ENCODE measurements at regions of chr1 and their contacts with region 1.

Region 1: DNA sequence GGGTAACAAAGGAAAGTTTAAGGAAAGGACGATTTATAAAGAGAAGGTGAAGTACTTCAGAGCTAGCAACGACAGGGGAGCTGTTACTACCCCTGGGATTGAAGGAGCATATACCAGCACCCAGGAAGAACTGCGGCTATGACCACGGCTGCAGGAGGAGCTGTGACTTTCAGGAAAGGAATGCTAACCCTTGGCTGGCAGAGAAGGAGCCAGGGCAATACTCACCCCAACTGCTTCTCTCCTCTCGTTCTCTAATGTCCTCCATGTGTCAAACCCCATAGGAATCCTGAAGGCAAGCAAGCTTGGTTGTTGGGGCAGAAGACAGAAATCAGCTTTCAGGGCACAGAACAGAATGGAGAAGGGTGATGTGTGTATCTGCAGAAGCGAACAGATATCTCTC is 120.5 kb downstream of the TMEM53 start:
- DNase-seq: peak; percentile 79
- H3K4me3 Mint-ChIP-seq: peak overlapping the region; percentile 15
- H3K27ac Mint-ChIP-seq: peak overlapping the region; percentile 93
- H3K4me1 Mint-ChIP-seq: peaks cover 67% of the 10 kb centered on the region
- H3K27me3 Mint-ChIP-seq: no peaks in the 10 kb centered on the region
- CTCF ChIP-seq: no peak

Region 2: DNA sequence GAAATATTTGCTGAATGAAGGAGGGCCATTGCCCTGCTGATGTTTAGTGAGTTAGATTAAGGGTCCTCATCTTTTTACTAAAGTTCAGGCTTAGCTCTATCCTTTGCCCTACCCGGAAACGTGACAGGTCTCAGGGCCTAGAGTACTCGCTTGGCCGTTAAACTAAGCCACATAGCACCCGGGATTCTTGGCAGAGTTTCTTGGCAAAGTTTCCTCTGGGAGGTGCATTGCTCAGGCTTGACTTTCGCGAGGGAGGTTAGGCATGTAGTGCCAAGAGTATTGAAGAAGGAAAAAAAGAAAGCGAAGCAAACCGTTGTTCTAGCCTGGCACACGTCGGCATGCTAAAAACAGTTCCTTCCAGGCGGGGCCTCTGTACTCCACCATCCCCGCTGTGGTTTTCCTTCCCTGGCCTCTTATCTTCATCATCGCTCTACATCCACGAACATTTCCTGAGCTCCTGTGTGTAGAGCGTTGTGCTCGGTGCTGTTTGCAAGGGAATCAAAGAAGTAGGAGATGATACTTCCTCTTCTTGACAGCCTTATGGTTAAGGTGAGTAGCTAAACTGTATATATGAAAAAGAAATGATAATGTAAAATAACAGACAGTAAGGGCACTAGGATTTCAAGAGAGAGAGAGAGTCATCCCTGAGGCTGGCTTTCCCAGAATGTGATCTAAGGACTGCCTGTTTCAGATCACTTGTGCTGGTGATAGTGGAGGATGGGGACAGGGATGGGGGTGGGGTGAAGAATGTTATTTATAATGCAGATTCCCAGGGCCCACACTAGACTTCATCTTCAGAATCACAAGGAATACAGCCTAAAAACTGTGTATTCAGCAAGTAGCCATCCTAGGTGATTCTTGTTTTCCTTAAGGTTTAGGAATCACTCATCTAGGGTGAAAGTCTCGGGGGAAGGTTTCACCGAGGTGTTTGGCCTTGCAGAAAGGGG is 129.9 kb before region 1 on chr1:
- CTCF ChIA-PET with region 1: interaction called, 3 read pairs
- POLR2A ChIA-PET with region 1: interaction called, 25 read pairs
- intact Hi-C with region 1: no loop called
- DNase-seq: peak; percentile 98
- H3K4me3 Mint-ChIP-seq: peak overlapping the region; percentile 73
- H3K27ac Mint-ChIP-seq: peak overlapping the region; percentile 89
- H3K4me1 Mint-ChIP-seq: peaks cover 36% of the 10 kb centered on the region
- H3K27me3 Mint-ChIP-seq: no peaks in the 10 kb centered on the region
- CTCF ChIP-seq: no peak

Region 3: DNA sequence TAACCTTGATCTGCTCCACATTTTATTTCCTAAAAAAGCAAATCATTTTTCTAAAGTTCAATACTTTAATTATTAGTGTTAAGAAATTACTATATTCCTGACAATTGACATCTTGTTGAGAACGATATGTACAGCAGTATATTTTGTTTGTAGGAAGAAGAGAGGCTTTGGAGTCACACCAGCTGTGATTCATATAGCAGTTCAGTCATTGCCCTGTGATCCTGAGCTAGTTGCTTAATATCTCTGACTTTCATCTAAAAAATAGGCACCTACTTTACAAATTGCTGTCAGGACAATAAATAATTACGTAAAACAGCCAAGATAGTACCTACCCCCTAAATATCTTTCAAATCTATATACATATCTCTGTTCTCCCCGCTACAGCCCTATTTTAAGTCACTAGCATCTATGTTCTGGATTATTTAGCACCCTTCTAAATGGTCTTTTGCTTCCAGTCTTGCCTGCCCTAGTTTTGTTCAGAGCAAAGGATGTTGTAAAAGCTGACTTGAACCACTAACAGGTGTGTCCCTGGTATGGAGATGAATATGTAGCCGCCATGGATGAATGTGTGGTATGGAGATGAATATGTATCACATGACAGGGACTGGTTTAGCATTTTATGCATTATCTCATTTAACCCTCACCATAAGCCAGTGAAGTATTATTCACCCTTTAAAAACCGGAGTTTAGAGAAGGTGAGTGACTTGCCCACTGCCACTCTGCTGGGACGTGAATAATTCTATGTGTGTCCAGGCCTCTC is 106.5 kb before region 1 on chr1:
- CTCF ChIA-PET with region 1: interaction called, 3 read pairs
- POLR2A ChIA-PET with region 1: interaction called, 19 read pairs
- intact Hi-C with region 1: no loop called
- DNase-seq: peak; percentile 35
- H3K4me3 Mint-ChIP-seq: no peak overlapping the region
- H3K27ac Mint-ChIP-seq: peak overlapping the region; percentile 64
- H3K4me1 Mint-ChIP-seq: peaks cover 18% of the 10 kb centered on the region
- H3K27me3 Mint-ChIP-seq: no peaks in the 10 kb centered on the region
- CTCF ChIP-seq: no peak

Region 4: GRCh38 chr1:44508397-44508745 is 45.4 kb before region 1 on chr1:
- CTCF ChIA-PET with region 1: no interaction called
- POLR2A ChIA-PET with region 1: no interaction called
- intact Hi-C with region 1: no loop called
- DNase-seq: no peak
- H3K4me3 Mint-ChIP-seq: no peak overlapping the region
- H3K27ac Mint-ChIP-seq: no peak overlapping the region
- H3K4me1 Mint-ChIP-seq: peaks cover 9% of the 10 kb centered on the region
- H3K27me3 Mint-ChIP-seq: no peaks in the 10 kb centered on the region
- CTCF ChIP-seq: no peak

Region 5: DNA sequence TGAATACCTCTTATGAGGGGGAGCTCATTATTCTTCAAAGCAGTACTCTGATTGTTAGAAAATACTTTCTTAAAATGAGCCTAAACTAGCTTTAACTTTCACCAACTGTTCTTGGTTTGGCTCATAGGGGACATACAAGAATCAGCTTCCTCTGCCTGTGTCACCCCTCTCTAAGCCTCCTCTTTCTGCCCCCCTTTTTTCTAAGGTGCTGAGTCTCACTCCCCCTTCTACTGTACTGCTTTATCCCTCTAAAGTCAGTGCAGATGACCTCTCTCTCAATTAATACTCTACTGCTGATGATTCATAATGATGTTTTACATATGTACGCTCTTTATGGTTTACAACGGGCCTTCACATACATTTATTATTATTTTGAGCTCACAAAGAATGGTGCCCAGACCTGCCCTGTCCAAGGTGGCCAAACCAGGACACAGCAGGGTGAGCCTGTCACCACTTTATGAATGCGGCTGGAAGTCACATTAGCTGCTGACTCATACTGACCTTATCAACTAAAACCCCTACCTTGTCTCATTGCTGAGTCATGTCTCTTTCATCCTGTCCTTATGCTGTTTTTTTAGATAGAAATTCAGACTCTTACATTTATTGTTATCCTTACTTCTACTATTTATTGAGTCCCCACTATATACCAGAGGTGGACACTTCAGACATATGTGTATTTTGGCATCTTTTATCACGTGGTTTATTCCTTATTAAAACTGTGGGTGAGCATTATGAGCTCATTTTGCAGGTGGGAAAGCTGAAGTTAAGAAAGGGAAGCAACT is 21.8 kb before region 1 on chr1:
- CTCF ChIA-PET with region 1: no interaction called
- POLR2A ChIA-PET with region 1: interaction called, 22 read pairs
- intact Hi-C with region 1: no loop called
- DNase-seq: peak; percentile 47
- H3K4me3 Mint-ChIP-seq: no peak overlapping the region
- H3K27ac Mint-ChIP-seq: peak overlapping the region; percentile 36
- H3K4me1 Mint-ChIP-seq: peaks cover 14% of the 10 kb centered on the region
- H3K27me3 Mint-ChIP-seq: no peaks in the 10 kb centered on the region
- CTCF ChIP-seq: no peak

Region 6: GRCh38 chr1:44571712-44572571 is 18.2 kb after region 1 on chr1:
- CTCF ChIA-PET with region 1: interaction called, 26 read pairs
- POLR2A ChIA-PET with region 1: interaction called, 19 read pairs
- intact Hi-C with region 1: no loop called
- DNase-seq: peak; percentile 40
- H3K4me3 Mint-ChIP-seq: no peak overlapping the region
- H3K27ac Mint-ChIP-seq: no peak overlapping the region
- H3K4me1 Mint-ChIP-seq: peaks cover 15% of the 10 kb centered on the region
- H3K27me3 Mint-ChIP-seq: no peaks in the 10 kb centered on the region
- CTCF ChIP-seq: peak; percentile 30

Region 7: DNA sequence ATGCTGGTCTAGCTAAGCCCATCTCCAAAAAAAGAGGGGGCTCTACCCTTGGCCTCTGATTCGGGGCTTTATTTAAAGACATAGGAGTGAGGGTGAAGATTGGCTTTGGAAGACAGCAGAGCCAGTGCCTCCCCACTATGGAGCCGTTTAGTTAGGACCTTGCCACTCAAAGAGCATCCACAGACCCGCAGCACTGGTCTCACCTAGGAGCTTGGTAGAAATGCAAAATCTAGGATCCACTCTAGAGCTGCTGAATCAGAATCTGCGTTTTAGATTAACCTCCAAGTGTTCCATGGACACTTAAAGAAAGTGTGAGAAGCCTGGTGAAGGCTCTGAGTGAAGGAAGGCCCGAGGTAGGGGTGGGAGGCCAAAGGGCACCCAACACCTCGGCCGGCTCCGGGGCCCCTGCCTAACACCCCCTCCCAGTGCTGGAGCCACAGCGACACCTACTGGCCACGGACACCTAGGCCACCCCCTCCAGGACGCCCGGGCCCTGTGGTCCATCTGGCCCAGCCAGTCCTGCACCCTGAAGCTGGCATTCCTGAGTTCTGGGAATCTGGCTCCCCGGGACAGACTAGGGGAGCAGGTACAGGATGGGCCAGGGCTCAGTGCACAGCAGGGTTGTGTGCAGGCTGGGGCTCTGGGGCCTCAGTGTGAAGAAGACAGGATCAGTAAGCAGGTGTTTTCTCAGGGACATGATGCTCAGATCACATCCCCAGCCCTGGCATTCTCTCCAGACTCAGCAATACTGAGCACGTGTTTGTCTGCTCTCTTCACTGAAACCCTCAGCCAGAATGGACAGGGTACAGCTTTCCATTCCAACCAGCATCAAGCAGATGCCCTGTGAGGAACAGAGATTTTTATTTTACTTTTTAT is 41.3 kb after region 1 on chr1:
- CTCF ChIA-PET with region 1: interaction called, 6 read pairs
- POLR2A ChIA-PET with region 1: interaction called, 44 read pairs
- intact Hi-C with region 1: no loop called
- DNase-seq: peak; percentile 72
- H3K4me3 Mint-ChIP-seq: no peak overlapping the region
- H3K27ac Mint-ChIP-seq: peak overlapping the region; percentile 63
- H3K4me1 Mint-ChIP-seq: peaks cover 19% of the 10 kb centered on the region
- H3K27me3 Mint-ChIP-seq: no peaks in the 10 kb centered on the region
- CTCF ChIP-seq: peak; percentile 99

Measured in MCF 10A (cell line).